WTC11 (cell line): ENCODE measurements at regions of chr10 and their contacts with region 1.

Region 1: GRCh38 chr10:109883859-109884771 is 39.2 kb downstream of the XPNPEP1 start:
- DNase-seq: peak; percentile 84
- ATAC-seq: peak; percentile 94
- H3K4me3 Mint-ChIP-seq: peak overlapping the region; percentile 42
- H3K27ac Mint-ChIP-seq: peak overlapping the region; percentile 94
- H3K4me1 Mint-ChIP-seq: peaks cover 12% of the 10 kb centered on the region
- H3K27me3 Mint-ChIP-seq: no peaks in the 10 kb centered on the region; the same call in 1 of the 2 replicates
- CTCF ChIP-seq: peak; percentile 88

Region 2: DNA sequence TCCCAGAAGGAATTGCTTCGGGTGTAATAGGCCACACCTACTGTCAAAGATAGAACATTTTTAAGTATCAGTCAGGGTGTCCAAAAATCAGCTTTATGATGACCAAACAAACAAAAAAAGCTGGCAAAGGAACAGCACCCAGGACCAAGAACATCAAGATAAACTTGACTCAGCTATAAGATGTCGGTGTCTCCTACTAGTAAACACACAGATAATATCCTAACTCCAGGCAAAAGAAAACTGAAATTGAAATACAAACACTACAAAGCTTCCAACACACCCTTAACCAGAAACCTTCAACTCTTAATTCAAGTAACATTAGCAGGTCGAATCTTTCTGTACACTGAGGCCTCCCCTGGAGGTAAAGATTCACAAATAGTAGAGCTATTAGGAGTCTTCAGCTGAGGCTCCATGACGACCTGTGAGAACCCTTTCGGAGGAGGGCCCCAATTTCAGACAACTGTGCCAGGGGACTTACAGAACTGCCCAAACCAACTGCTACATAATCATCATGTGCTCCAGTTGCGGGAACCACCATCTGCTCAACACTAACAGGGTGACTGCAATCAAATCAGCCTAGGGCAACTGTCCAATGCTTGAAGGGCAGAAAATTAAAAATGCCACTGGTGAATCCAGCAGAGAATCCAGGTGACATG is 18.9 kb after region 1 on chr10:
- CTCF ChIA-PET with region 1: interaction called, 56 read pairs
- POLR2A ChIA-PET with region 1: no interaction called
- DNase-seq: no peak
- ATAC-seq: no peak
- H3K4me3 Mint-ChIP-seq: no peak overlapping the region
- H3K27ac Mint-ChIP-seq: peak overlapping the region; percentile 22; the same call in 1 of the 2 replicates
- H3K4me1 Mint-ChIP-seq: no peaks in the 10 kb centered on the region; the same call in 1 of the 2 replicates
- H3K27me3 Mint-ChIP-seq: no peaks in the 10 kb centered on the region
- CTCF ChIP-seq: no peak

Region 3: GRCh38 chr10:109956454-109957091 is 72.5 kb after region 1 on chr10:
- CTCF ChIA-PET with region 1: interaction called, 18 read pairs
- POLR2A ChIA-PET with region 1: interaction called, 3 read pairs
- DNase-seq: peak; percentile 39
- ATAC-seq: peak; percentile 93
- H3K4me3 Mint-ChIP-seq: no peak overlapping the region
- H3K27ac Mint-ChIP-seq: no peak overlapping the region; the same call in 1 of the 2 replicates
- H3K4me1 Mint-ChIP-seq: peaks cover 49% of the 10 kb centered on the region
- H3K27me3 Mint-ChIP-seq: no peaks in the 10 kb centered on the region; the same call in 1 of the 2 replicates
- CTCF ChIP-seq: peak; percentile 83

Region 4: GRCh38 chr10:110007701-110008517 is 123.8 kb after region 1 on chr10 and contains the start of gene ADD3:
- CTCF ChIA-PET with region 1: interaction called, 46 read pairs
- POLR2A ChIA-PET with region 1: interaction called, 6 read pairs
- DNase-seq: peak; percentile 99
- ATAC-seq: peak; percentile 85
- H3K4me3 Mint-ChIP-seq: peak within 1 kb of the TSS; percentile 95
- H3K27ac Mint-ChIP-seq: peak within 1 kb of the TSS; percentile 90
- H3K4me1 Mint-ChIP-seq: peaks cover 58% of the 10 kb centered on the region
- H3K27me3 Mint-ChIP-seq: no peaks in the 10 kb centered on the region
- CTCF ChIP-seq: no peak
- total RNA-seq, gene ADD3: 86.7 to 95.7 TPM (median 88.3 TPM) in 3 replicates

Region 5: GRCh38 chr10:110058212-110058611 is 174.1 kb after region 1 on chr10:
- CTCF ChIA-PET with region 1: interaction called, 13 read pairs
- POLR2A ChIA-PET with region 1: no interaction called
- DNase-seq: no peak
- ATAC-seq: no peak
- H3K4me3 Mint-ChIP-seq: no peak overlapping the region
- H3K27ac Mint-ChIP-seq: peak overlapping the region; percentile 80
- H3K4me1 Mint-ChIP-seq: peaks cover 20% of the 10 kb centered on the region
- H3K27me3 Mint-ChIP-seq: no peaks in the 10 kb centered on the region
- CTCF ChIP-seq: no peak

Region 6: DNA sequence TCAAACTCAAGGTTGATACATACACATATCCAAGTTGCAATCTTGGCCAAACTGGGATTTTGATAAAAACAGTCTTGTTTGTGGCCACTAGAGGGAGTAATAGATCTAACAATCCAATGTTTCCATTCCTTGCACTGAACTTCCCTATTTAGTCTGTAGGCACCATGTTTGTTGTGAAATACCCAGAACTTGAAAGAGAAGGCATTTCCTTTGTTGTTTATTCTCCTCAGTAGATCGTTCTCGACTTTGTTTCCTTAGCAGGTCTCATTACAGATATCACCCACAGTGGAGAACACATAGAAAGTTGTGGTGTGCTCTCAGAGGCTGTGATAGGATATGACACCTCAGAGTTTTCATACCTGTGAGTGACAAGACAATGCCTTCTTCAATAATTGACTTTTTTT is 253.0 kb after region 1 on chr10:
- CTCF ChIA-PET with region 1: interaction called, 35 read pairs
- POLR2A ChIA-PET with region 1: no interaction called
- DNase-seq: no peak
- ATAC-seq: peak; percentile 67
- H3K4me3 Mint-ChIP-seq: no peak overlapping the region
- H3K27ac Mint-ChIP-seq: peak overlapping the region; percentile 25; the same call in 1 of the 2 replicates
- H3K4me1 Mint-ChIP-seq: 0 out of 2 replicates have a peak, but pooled peaks cover 3% of the 10 kb centered on the region
- H3K27me3 Mint-ChIP-seq: no peaks in the 10 kb centered on the region
- CTCF ChIP-seq: peak; percentile 60

Region 7: DNA sequence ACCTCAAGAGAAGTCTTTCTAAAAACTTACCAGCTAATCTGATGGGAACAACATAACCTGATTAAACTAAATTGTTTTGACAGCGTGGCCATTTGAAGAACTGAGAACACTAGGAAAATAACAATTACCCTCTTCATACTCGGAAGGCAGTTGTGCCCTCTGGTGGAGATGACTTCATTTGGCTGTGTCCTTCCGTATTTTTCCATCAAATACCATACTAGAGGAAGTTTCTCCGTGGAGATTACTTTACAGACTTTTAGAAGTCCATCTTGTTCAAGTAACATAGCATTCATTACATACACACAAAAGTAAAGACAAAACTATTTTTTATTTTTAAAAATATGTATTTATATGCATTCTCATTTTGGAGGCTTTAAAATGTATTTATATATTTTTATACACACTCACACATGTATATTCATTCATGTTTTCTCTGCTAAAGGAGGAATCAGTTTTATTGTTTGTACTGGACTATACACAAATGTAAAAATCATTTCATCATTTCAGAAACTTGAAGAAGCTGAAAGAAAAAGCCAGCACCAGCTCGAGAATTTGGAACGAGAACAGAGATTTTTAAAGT is 395.4 kb after region 1 on chr10:
- CTCF ChIA-PET with region 1: interaction called, 10 read pairs
- POLR2A ChIA-PET with region 1: no interaction called
- DNase-seq: peak; percentile 20
- ATAC-seq: peak; percentile 64
- H3K4me3 Mint-ChIP-seq: no peak overlapping the region
- H3K27ac Mint-ChIP-seq: peak overlapping the region; percentile 45; the same call in 1 of the 2 replicates
- H3K4me1 Mint-ChIP-seq: peaks cover 12% of the 10 kb centered on the region
- H3K27me3 Mint-ChIP-seq: no peaks in the 10 kb centered on the region
- CTCF ChIP-seq: no peak